ENCODE measurements at regions of chr10 and their contacts with region 1.

Region 1: GRCh38 chr10:103244663-103245271 is 920 bp upstream of the RPEL1 start:
- DNase-seq: peak; percentile 83
- H3K4me3 Mint-ChIP-seq: no peak overlapping the region
- H3K27ac Mint-ChIP-seq: no peak overlapping the region
- H3K4me1 Mint-ChIP-seq: peaks cover 17% of the 10 kb centered on the region
- H3K27me3 Mint-ChIP-seq: no peaks in the 10 kb centered on the region

Region 2: GRCh38 chr10:102835007-102835482 is 409.7 kb before region 1 on chr10:
- CTCF ChIA-PET with region 1: interaction called, 10 read pairs
- intact Hi-C with region 1: loop called (anchors 1 kb)
- DNase-seq: peak; percentile 85
- H3K4me3 Mint-ChIP-seq: no peak overlapping the region
- H3K27ac Mint-ChIP-seq: no peak overlapping the region
- H3K4me1 Mint-ChIP-seq: no peaks in the 10 kb centered on the region
- H3K27me3 Mint-ChIP-seq: peaks cover 3% of the 10 kb centered on the region

Region 3: GRCh38 chr10:103090911-103091310 is 153.9 kb before region 1 on chr10:
- CTCF ChIA-PET with region 1: interaction called, 6 read pairs
- intact Hi-C with region 1: loop called (anchors 5 kb)
- DNase-seq: no peak
- H3K4me3 Mint-ChIP-seq: no peak overlapping the region
- H3K27ac Mint-ChIP-seq: no peak overlapping the region
- H3K4me1 Mint-ChIP-seq: no peaks in the 10 kb centered on the region
- H3K27me3 Mint-ChIP-seq: no peaks in the 10 kb centered on the region

Region 4: GRCh38 chr10:103181244-103181643 is 63.5 kb before region 1 on chr10:
- CTCF ChIA-PET with region 1: interaction called, 10 read pairs
- intact Hi-C with region 1: no loop called
- DNase-seq: no peak
- H3K4me3 Mint-ChIP-seq: no peak overlapping the region
- H3K27ac Mint-ChIP-seq: no peak overlapping the region
- H3K4me1 Mint-ChIP-seq: peaks cover 35% of the 10 kb centered on the region
- H3K27me3 Mint-ChIP-seq: no peaks in the 10 kb centered on the region

Region 5: GRCh38 chr10:103333925-103334520 is 89.3 kb after region 1 on chr10:
- CTCF ChIA-PET with region 1: interaction called, 8 read pairs
- intact Hi-C with region 1: loop called (anchors 10 kb)
- DNase-seq: no peak
- H3K4me3 Mint-ChIP-seq: no peak overlapping the region
- H3K27ac Mint-ChIP-seq: no peak overlapping the region
- H3K4me1 Mint-ChIP-seq: no peaks in the 10 kb centered on the region
- H3K27me3 Mint-ChIP-seq: no peaks in the 10 kb centered on the region

Region 6: DNA sequence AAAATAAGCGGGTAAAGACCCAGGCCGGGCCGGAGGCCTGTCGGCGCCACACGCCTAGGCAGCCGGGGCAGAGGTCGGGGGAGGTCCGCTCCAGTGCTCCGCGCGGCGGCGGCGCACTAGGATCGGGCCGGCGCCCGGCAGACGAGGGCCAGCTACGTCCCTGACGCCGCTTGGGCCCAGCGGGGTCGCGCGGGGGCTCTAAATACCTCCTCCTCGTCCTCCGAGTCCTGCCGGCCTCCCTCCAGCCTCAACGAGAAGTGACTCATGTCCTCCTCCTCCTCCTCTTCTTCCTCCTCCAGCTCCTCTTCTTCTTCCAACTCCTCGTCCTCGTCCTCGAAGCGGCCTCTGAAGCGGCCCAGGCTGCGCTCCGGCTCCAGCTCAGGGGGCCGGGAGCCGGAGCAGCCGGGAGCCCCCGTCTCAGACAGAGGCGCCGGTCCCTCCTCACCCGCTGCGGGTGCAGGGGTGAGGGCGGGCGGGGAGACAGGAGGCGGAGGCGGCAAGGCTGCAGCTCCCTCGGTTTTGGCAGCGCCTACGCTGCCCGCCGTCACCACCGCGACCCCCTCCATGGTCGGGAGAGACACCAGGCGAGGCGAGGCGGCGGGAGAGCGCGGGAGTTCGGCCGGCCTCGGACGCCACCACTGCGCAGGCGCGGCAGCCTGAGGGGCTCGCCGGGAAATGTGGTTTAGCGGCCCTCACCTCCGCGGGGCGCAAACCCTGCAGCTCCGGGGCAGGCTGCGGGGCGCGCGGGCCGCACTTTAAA is 105.9 kb after region 1 on chr10 and contains the start of gene PCGF6:
- CTCF ChIA-PET with region 1: no interaction called
- intact Hi-C with region 1: no loop called
- DNase-seq: peak; percentile 70
- H3K4me3 Mint-ChIP-seq: peak within 1 kb of the TSS; percentile 90
- H3K27ac Mint-ChIP-seq: peak within 1 kb of the TSS; percentile 86
- H3K4me1 Mint-ChIP-seq: peaks cover 12% of the 10 kb centered on the region
- H3K27me3 Mint-ChIP-seq: no peaks in the 10 kb centered on the region
- total RNA-seq, gene PCGF6: 10.6 to 10.7 TPM